Right cardiac atrium (tissue), 5 donors: ENCODE measurements at regions of chr2 and their contacts with region 1.

Region 1: DNA sequence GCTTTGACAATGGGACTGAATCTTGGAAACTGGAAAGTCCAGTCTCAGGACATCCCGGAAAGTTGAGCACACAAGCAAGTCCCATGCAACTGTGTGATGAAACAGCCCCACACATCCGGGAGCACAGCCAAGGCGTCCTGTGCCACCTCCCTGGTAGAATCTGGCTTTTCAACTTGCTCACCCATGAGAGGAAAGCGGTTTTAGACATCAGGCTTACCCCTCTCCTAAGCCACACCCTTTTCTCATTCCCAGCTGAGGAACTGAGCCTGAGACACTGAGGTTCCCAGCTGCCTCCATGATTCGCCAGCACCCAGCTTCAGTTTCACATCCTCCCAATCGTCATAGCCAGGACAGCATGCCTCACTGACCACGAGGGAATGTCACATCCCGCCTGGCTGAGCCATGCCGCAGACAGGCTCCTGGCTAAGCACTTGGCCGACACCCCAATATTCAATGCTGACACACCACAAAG is 60.3 kb downstream of the STEAP3 start:
- DNase-seq: peak; percentile 74 to 83 (median 78)
- ATAC-seq: peak; percentile 88 to 89
- H3K4me3 ChIP-seq: no peak overlapping the region
- H3K27ac ChIP-seq: peak overlapping the region; percentile 6
- H3K4me1 ChIP-seq: no peaks in the 10 kb centered on the region
- H3K27me3 ChIP-seq: no peaks in the 10 kb centered on the region

Region 2: GRCh38 chr2:119106301-119106897 is 177.5 kb before region 1 on chr2:
- intact Hi-C with region 1: no loop called
- DNase-seq: peak in 2 of 3 donors; percentile 68 to 72
- ATAC-seq: no peak
- H3K4me3 ChIP-seq: no peak overlapping the region
- H3K27ac ChIP-seq: no peak overlapping the region
- H3K4me1 ChIP-seq: no peaks in the 10 kb centered on the region
- H3K27me3 ChIP-seq: peaks cover 4% of the 10 kb centered on the region

Region 3: GRCh38 chr2:119223521-119224390 is 60.1 kb before region 1 on chr2 and contains the start of gene STEAP3:
- intact Hi-C with region 1: loop called in 2 of 4 experiments (anchors 10 kb)
- DNase-seq: peak; percentile 88 to 95 (median 92)
- ATAC-seq: peak; percentile 93 to 97
- H3K4me3 ChIP-seq: peak within 1 kb of the TSS; percentile 73
- H3K27ac ChIP-seq: no peak within 1 kb of the TSS
- H3K4me1 ChIP-seq: peaks cover 2% of the 10 kb centered on the region
- H3K27me3 ChIP-seq: no peaks in the 10 kb centered on the region
- total RNA-seq, gene STEAP3: 7.2 to 12.4 (median 10.2) TPM